Common myeloid progenitor, CD34-positive (primary cell): ENCODE measurements at regions of chr6 and their contacts with region 1.

Region 1: GRCh38 chr6:32952817-32953739 is at the start of gene HLA-DMA:
- DNase-seq: peak; percentile 99 to 100 (median 99)
- H3K4me3 ChIP-seq: peak within 1 kb of the TSS; percentile 47 to 99 (median 80)
- H3K27ac ChIP-seq: peak within 1 kb of the TSS; percentile 78 to 91
- H3K4me1 ChIP-seq: peaks cover 13 to 55% (median 50%) of the 10 kb centered on the region in 4 experiments
- H3K27me3 ChIP-seq: no peaks in the 10 kb centered on the region

Region 2: GRCh38 chr6:32432050-32432450 is 521.0 kb before region 1 on chr6:
- CTCF ChIA-PET with region 1: no interaction called
- POLR2A ChIA-PET with region 1: no interaction called
- DNase-seq: peak; percentile 60 to 69 (median 63)
- H3K4me3 ChIP-seq: no peak overlapping the region
- H3K27ac ChIP-seq: no peak overlapping the region
- H3K4me1 ChIP-seq: peaks cover 2 to 8% (median 5%) of the 10 kb centered on the region in 4 experiments
- H3K27me3 ChIP-seq: no peaks in the 10 kb centered on the region

Region 3: GRCh38 chr6:32885698-32886286 is 67.3 kb before region 1 on chr6:
- CTCF ChIA-PET with region 1: interaction called, 26 read pairs
- POLR2A ChIA-PET with region 1: no interaction called
- DNase-seq: peak; percentile 80 to 92 (median 86)
- H3K4me3 ChIP-seq: no peak overlapping the region
- H3K27ac ChIP-seq: no peak overlapping the region
- H3K4me1 ChIP-seq: peaks cover 0 to 2% (median 0%) of the 10 kb centered on the region in 4 experiments
- H3K27me3 ChIP-seq: peaks cover 0 to 3% (median 0%) of the 10 kb centered on the region in 5 experiments

Region 4: DNA sequence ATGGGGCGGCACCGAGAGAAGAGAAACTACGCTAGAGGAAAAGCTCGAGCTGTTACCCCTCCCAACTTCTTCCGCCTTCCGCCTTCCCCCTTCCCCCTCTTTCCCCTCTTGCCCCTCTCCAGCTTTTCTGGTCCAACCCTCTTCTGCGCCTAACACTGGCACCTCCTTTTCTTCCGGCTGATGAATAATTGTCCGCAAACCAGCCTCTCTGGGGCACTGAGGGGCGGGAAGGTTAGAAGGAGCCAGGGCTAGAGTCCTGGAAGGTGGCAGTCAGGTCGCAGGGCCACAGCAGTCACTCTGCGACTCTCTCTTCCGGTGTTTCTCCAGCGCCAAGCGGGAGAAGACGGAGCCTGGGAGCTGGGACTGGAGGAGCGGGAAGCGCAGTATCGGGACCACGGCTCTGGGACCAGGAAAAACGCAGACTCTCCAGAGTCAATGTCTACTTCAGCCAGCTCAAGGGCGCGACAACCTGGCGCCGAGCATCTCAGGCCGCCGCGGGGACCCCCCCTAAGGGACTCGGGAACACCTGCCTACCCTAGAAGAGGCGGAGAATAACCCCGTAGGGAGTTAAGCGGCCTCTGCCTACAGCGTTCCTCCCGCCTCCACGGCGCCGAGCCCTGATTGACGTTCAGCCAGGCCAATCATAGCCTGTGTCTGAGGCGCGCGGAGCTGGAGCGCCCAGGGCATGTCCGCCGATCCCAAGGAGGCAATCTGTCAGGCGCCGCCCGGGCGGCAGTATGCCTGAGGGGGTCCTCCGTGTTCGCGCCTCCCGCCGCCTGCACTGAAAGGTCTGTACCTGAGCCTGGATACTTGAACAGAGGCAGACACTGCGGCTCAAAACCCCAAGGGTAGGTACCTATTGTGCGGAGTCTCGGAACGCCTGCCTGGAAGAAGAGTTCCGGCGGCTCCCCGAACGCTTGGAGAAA is 58.7 kb before region 1 on chr6:
- CTCF ChIA-PET with region 1: interaction called, 22 read pairs
- POLR2A ChIA-PET with region 1: interaction called, 7 read pairs
- DNase-seq: peak; percentile 92 to 96 (median 94)
- H3K4me3 ChIP-seq: peak overlapping the region; percentile 69 to 98 (median 97)
- H3K27ac ChIP-seq: peak overlapping the region; percentile 57 to 88
- H3K4me1 ChIP-seq: peaks cover 6 to 37% (median 18%) of the 10 kb centered on the region in 4 experiments
- H3K27me3 ChIP-seq: no peaks in the 10 kb centered on the region

Region 5: DNA sequence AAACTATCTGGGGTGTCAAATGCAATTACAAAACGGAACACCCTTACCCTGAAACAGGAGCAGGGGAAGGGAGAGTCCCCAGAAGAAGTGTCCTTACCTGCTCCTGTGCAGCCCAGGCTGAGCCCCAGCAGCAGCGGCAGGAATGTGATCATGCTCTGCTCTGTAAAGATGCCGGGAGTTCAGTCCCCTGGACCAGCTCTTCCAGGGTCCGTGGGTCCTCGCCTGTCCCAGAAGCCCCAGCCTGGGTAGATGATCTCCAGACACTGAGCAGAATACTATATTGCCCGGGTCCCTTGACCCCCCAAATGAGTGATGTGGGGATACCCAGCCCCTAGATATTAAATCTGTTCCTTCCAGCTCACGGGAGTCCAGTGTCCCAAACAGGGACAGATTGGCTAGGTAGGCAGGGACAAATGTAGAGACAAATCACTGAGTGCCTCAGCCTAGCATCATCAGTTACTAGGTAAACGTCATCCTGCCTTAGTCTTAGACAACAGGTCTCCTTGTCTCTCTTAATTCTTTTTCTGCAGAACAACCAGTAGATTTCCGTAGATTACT is 12.3 kb before region 1 on chr6 and contains the start of gene HLA-DMB:
- CTCF ChIA-PET with region 1: interaction called, 175 read pairs
- POLR2A ChIA-PET with region 1: interaction called, 5 read pairs
- DNase-seq: peak; percentile 85 to 88 (median 87)
- H3K4me3 ChIP-seq: peak within 1 kb of the TSS; percentile 70 to 97 (median 89)
- H3K27ac ChIP-seq: peak within 1 kb of the TSS; percentile 72 to 83
- H3K4me1 ChIP-seq: peaks cover 36 to 78% (median 59%) of the 10 kb centered on the region in 4 experiments
- H3K27me3 ChIP-seq: no peaks in the 10 kb centered on the region

Region 6: DNA sequence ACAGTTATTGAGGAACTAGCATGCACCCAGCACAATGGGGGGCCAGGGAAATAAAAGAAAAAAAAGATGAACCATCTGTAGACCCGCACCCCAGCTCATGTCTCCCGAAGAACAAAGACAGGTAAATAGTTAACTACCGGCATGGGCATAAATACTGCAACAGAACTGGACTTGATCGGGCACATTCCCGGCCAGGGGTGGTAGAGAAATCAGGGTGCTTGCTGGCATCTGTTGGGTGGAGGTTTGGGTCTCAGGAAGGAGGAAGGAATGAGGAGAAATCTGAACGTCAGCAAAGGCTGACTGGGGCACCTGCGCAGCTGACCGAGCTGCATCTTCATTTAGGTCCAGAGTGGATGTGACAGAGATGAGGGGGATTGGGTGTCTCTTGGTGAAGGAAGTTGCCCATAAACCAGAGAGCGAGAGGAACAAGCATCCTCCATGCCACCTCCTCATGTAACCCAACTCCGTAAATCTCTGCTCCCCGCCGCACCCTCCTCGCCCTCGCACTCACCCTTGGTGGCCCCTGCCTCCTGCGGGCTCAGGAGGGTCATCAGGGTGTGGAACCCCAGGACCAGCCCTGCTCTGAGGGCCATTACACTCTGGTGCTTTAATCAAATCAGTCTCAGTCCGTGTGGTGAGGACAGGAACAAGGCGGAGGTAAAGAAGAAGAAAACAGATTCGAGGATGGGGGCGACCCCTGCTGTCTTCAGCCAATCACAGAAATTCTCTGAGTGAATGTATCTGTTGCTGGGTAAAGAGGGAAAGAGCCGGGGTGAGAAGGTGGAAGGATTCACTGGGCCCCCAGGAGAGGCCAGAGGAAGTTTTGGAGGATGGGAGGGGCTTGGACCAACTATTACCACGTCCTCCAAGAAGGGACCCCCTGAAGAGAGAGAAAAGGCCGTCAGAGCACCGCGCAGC is 56.1 kb after region 1 on chr6 and contains the start of gene HLA-DOA:
- CTCF ChIA-PET with region 1: no interaction called
- POLR2A ChIA-PET with region 1: no interaction called
- DNase-seq: peak; percentile 67 to 86 (median 85)
- H3K4me3 ChIP-seq: peak within 1 kb of the TSS; percentile 72 to 92 (median 89)
- H3K27ac ChIP-seq: peak within 1 kb of the TSS in 1 of 2 experiments; percentile 46
- H3K4me1 ChIP-seq: peaks cover 5 to 16% (median 11%) of the 10 kb centered on the region in 4 experiments
- H3K27me3 ChIP-seq: no peaks in the 10 kb centered on the region